CD8-positive, alpha-beta T cell (primary cell): ENCODE measurements at regions of chr2 and their contacts with region 1.

Region 1: GRCh38 chr2:28894470-28895177 is at the start of gene WDR43:
- DNase-seq: peak; percentile 94 to 99 (median 98)
- ATAC-seq: peak; percentile 98
- H3K4me3 ChIP-seq: peak within 1 kb of the TSS; percentile 81 to 89
- H3K4me3 Mint-ChIP-seq: peak within 1 kb of the TSS; percentile 96
- H3K27ac ChIP-seq: peak within 1 kb of the TSS; percentile 68 to 81
- H3K27ac Mint-ChIP-seq: peak within 1 kb of the TSS; percentile 92
- H3K4me1 ChIP-seq: peaks cover 37% of the 10 kb centered on the region
- H3K4me1 Mint-ChIP-seq: peaks cover 44% of the 10 kb centered on the region
- H3K27me3 ChIP-seq: no peaks in the 10 kb centered on the region
- H3K27me3 Mint-ChIP-seq: no peaks in the 10 kb centered on the region
- CTCF ChIP-seq: no peak
- total RNA-seq, gene WDR43: 89.2 to 90.0 TPM

Region 2: GRCh38 chr2:27771548-27772335 is 1122.9 kb before region 1 on chr2 and contains the start of gene MRPL33:
- CTCF ChIA-PET with region 1: no interaction called
- POLR2A ChIA-PET with region 1: no interaction called
- intact Hi-C with region 1: loop called in 1 of 2 experiments (anchors 5 kb)
- DNase-seq: peak; percentile 82 to 94 (median 92)
- ATAC-seq: peak; percentile 89
- H3K4me3 ChIP-seq: peak within 1 kb of the TSS; percentile 93 to 99
- H3K4me3 Mint-ChIP-seq: peak within 1 kb of the TSS; percentile 100
- H3K27ac ChIP-seq: peak within 1 kb of the TSS; percentile 93 to 96
- H3K27ac Mint-ChIP-seq: peak within 1 kb of the TSS; percentile 100
- H3K4me1 ChIP-seq: peaks cover 27% of the 10 kb centered on the region
- H3K4me1 Mint-ChIP-seq: peaks cover 51% of the 10 kb centered on the region
- H3K27me3 ChIP-seq: no peaks in the 10 kb centered on the region
- H3K27me3 Mint-ChIP-seq: peaks cover 4% of the 10 kb centered on the region
- CTCF ChIP-seq: no peak
- total RNA-seq, gene MRPL33: 35.8 to 39.0 TPM

Region 3: GRCh38 chr2:28810384-28811285 is 84.0 kb before region 1 on chr2 and contains the start of gene SPDYA:
- CTCF ChIA-PET with region 1: no interaction called
- POLR2A ChIA-PET with region 1: no interaction called
- intact Hi-C with region 1: loop called (anchors 1 kb)
- DNase-seq: peak; percentile 52 to 89 (median 76)
- ATAC-seq: peak; percentile 92
- H3K4me3 ChIP-seq: peak within 1 kb of the TSS; percentile 62 to 69
- H3K4me3 Mint-ChIP-seq: peak within 1 kb of the TSS; percentile 86
- H3K27ac ChIP-seq: peak within 1 kb of the TSS; percentile 24 to 69
- H3K27ac Mint-ChIP-seq: no peak within 1 kb of the TSS
- H3K4me1 ChIP-seq: peaks cover 6% of the 10 kb centered on the region
- H3K4me1 Mint-ChIP-seq: peaks cover 18% of the 10 kb centered on the region
- H3K27me3 ChIP-seq: no peaks in the 10 kb centered on the region
- H3K27me3 Mint-ChIP-seq: no peaks in the 10 kb centered on the region
- CTCF ChIP-seq: no peak
- total RNA-seq, gene SPDYA: 11.8 to 12.4 TPM

Region 4: DNA sequence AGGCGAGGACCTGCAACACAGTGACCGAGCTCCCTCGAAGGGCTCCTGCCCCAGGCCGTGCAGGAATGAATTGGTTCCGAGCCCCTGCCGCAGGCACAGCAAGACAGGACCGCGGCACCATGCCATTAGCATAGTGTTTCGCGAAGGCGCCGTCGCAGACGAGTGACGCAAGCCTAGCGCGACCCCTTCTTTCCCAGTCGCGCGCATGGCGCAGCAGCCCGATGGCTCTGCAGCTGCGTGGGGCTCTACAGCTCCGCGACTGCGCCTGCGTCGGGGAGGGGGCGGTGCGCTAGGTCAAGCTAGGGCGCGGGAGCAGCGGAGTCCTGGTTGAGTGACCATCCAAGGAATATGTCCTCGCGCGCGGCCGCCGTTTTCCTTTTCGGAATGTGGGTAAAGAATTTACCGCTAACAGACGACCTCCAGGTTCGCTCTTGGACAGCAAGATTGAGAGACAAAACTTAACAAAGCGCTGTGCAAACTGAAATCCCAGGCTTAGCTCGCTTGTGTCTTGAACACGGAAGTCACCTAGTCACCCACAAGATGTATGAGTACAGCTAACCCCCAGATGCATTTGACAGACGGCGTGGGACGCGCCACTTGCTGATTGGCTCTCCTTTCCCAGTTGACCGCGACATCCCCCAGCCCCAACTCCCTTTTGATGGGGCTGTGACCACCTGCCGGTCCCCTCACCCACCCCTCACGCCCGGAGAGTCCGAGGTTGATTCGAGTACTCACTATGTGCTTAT is 24.3 kb before region 1 on chr2 and contains the start of gene TRMT61B:
- CTCF ChIA-PET with region 1: interaction called, 12 read pairs
- POLR2A ChIA-PET with region 1: interaction called, 96 read pairs
- intact Hi-C with region 1: loop called (anchors 1 kb)
- DNase-seq: peak; percentile 89 to 99 (median 97)
- ATAC-seq: peak; percentile 96
- H3K4me3 ChIP-seq: peak within 1 kb of the TSS; percentile 89 to 98
- H3K4me3 Mint-ChIP-seq: peak within 1 kb of the TSS; percentile 94
- H3K27ac ChIP-seq: peak within 1 kb of the TSS; percentile 94 to 95
- H3K27ac Mint-ChIP-seq: peak within 1 kb of the TSS; percentile 99
- H3K4me1 ChIP-seq: peaks cover 28% of the 10 kb centered on the region
- H3K4me1 Mint-ChIP-seq: peaks cover 33% of the 10 kb centered on the region
- H3K27me3 ChIP-seq: no peaks in the 10 kb centered on the region
- H3K27me3 Mint-ChIP-seq: no peaks in the 10 kb centered on the region
- CTCF ChIP-seq: no peak
- total RNA-seq, gene TRMT61B: 17.9 to 22.9 TPM